ENCODE measurements at regions of chr20 and their contacts with region 1.

Region 1: GRCh38 chr20:41738604-41739206 is 120.5 kb upstream of the CHD6 start:
- DNase-seq: no peak
- ATAC-seq: peak; percentile 87
- H3K4me3 ChIP-seq: no peak overlapping the region
- H3K27ac ChIP-seq: no peak overlapping the region
- H3K4me1 ChIP-seq: no peaks in the 10 kb centered on the region
- H3K27me3 ChIP-seq: no peaks in the 10 kb centered on the region
- CTCF ChIP-seq: peak; percentile 79 to 89 (median 84)
- EP300 ChIP-seq: no peak
- POLR2A ChIP-seq: no peak
- RAD21 ChIP-seq: peak; percentile 84

Region 2: GRCh38 chr20:42530822-42531448 is 792.2 kb after region 1 on chr20:
- CTCF ChIA-PET with region 1: interaction called, 6 read pairs
- POLR2A ChIA-PET with region 1: no interaction called
- RAD21 ChIA-PET with region 1: interaction called, 3 read pairs
- SMC1A ChIA-PET with region 1: no interaction called
- in situ Hi-C with region 1: loop called (anchors 25 kb)
- intact Hi-C with region 1: loop called (anchors 10 kb)
- DNase-seq: no peak
- ATAC-seq: peak; percentile 68
- H3K4me3 ChIP-seq: no peak overlapping the region
- H3K27ac ChIP-seq: no peak overlapping the region
- H3K4me1 ChIP-seq: no peaks in the 10 kb centered on the region
- H3K27me3 ChIP-seq: no peaks in the 10 kb centered on the region; a peak in 1 of 4 replicates
- CTCF ChIP-seq: peak; percentile 58 to 65 (median 64)
- EP300 ChIP-seq: no peak
- POLR2A ChIP-seq: no peak
- RAD21 ChIP-seq: peak; percentile 61

Region 3: DNA sequence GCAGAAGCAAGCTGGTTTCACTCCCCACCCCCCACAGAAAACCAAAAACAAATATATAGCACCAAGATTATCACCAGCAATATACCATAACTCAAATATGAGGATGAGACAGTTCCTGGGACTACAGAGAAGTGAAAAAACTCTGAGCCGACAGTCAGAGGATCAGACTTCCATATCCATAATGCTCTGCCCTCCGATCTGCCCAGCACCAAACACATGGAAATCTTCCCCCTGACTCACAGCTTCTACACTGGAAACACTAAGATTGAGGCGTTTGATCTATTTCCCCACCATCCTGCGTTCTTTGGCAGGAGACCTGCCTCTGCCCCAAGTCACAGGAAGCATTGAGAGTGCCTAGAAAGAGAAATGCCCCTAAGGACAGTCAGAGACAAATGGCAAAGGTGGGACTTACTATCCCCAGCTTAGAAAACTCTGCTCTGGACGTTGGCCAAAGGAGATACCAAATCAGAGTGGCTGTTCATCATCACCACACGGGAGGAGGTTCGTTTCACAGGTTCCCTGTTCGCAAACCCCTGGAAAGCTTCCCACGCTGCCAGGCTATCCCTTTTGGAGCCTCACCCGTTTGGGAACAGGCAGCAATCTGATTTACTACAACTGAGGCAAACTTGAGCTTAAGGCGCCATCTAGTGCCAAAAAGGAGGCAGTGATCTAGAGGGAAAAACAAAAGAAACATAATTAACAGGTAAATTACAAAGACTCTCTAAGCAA is 1670.3 kb after region 1 on chr20:
- CTCF ChIA-PET with region 1: interaction called, 5 read pairs
- POLR2A ChIA-PET with region 1: no interaction called
- RAD21 ChIA-PET with region 1: interaction called, 7 read pairs
- SMC1A ChIA-PET with region 1: interaction called, 3 read pairs
- in situ Hi-C with region 1: loop called (anchors 10 kb)
- intact Hi-C with region 1: loop called (anchors 5 kb)
- DNase-seq: peak; percentile 7
- ATAC-seq: peak; percentile 46; the same call in 2 of the 3 replicates
- H3K4me3 ChIP-seq: no peak overlapping the region
- H3K27ac ChIP-seq: no peak overlapping the region
- H3K4me1 ChIP-seq: no peaks in the 10 kb centered on the region
- H3K27me3 ChIP-seq: no peaks in the 10 kb centered on the region
- CTCF ChIP-seq: peak; percentile 59 to 63 (median 62); a peak in 5 of 6 replicates
- EP300 ChIP-seq: no peak
- POLR2A ChIP-seq: no peak
- RAD21 ChIP-seq: peak; percentile 75

Region 4: DNA sequence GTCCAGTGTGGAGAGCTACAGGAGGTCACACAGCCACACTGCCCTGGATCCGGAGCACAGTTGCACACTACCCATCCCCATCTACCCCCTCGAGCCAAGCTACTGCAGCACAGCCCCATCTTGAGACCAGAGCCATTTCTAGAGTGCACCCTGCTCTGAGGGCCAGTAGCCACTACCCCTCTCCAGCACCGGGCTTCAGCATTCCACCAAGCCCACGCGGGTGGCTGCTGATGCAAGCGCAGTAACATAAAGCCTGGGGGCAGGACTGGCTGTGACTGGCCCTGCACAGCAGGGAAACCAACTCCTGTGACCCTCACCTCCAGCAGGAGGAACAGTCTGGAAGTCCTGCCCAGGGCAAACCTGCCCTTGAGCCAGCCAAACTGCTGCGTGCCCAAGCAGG is 1677.4 kb after region 1 on chr20:
- CTCF ChIA-PET with region 1: no interaction called
- POLR2A ChIA-PET with region 1: no interaction called
- RAD21 ChIA-PET with region 1: no interaction called
- SMC1A ChIA-PET with region 1: no interaction called
- in situ Hi-C with region 1: loop called (anchors 10 kb)
- intact Hi-C with region 1: no loop called
- DNase-seq: no peak
- ATAC-seq: no peak
- H3K4me3 ChIP-seq: no peak overlapping the region
- H3K27ac ChIP-seq: no peak overlapping the region
- H3K4me1 ChIP-seq: no peaks in the 10 kb centered on the region
- H3K27me3 ChIP-seq: no peaks in the 10 kb centered on the region
- CTCF ChIP-seq: no peak
- EP300 ChIP-seq: no peak
- POLR2A ChIP-seq: no peak
- RAD21 ChIP-seq: no peak

Measured in GM12878 (cell line).